Head of caudate nucleus (tissue), 42 donors: ENCODE measurements at regions of chr5 and their contacts with region 1.

Region 1: GRCh38 chr5:74766849-74767578 is at the starts of genes GFM2 and NSA2:
- DNase-seq: peak; percentile 84 to 99 (median 96)

Region 2: GRCh38 chr5:74673011-74673790 is 93.8 kb before region 1 on chr5:
- intact Hi-C with region 1: loop called (anchors 10 kb)
- DNase-seq: peak; percentile 15 to 84 (median 62)

Region 3: GRCh38 chr5:74798977-74799911 is 32.2 kb after region 1 on chr5:
- intact Hi-C with region 1: no loop called
- DNase-seq: peak; percentile 28 to 86 (median 63)

Region 4: GRCh38 chr5:74865804-74866595 is 99.0 kb after region 1 on chr5 and contains the start of gene FAM169A:
- intact Hi-C with region 1: loop called (anchors 10 kb)
- DNase-seq: peak in 38 of 42 donors; percentile 17 to 77 (median 56)

Region 5: DNA sequence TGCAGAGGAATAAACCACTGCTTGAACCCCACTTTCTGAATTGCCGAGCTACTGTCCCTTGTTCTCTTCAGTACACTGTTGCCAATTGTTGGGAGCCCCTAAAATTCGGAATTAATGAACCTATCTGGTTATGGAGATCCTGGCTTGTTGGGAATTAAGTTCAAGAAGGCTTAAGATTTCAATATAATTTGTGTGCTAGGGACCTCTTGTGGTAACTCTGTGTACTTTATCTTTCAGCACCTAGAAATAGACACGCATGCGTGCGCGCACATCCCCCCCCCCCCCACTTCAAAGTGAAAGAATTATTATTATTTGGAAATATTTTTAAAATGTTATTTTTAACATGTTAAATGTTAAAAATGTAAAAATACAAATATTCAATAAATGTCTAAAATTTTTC is 152.5 kb after region 1 on chr5:
- intact Hi-C with region 1: loop called (anchors 10 kb)
- DNase-seq: peak in 17 of 42 donors; percentile 8 to 63 (median 23)